ENCODE measurements at regions of chr13 and their contacts with region 1.

Region 1: DNA sequence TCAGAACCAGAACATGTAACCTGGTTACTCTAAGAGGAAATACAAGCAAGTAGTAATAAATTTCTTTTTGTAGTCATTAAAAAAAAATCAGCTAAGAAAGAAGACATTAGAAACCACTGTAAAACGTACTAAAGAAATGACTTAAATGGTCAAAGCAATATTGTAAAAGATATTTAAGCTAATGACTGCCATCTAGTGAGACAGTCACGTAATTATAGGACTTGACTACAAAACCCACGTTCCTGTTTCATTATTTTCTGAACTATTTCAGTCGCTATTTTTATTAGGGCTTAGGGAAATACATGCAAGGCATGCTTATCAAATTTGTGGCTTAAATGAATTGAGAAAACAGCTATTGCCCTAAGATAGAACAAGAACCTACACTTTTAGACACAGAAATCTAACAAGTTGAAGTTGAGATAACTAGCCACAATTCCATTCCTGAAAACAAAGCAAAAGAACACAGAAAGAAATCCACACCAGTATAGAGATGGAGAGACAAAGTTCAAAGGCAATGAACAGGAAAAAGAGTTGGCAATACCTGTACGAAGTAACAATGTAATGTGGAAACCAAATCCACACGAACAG is 17.9 kb downstream of the ALG5 start:
- DNase-seq: peak in 2 of 3 donors; percentile 24 to 35
- H3K4me3 ChIP-seq: no peak overlapping the region
- H3K4me3 Mint-ChIP-seq: no peak overlapping the region
- H3K27ac ChIP-seq: no peak overlapping the region
- H3K27ac Mint-ChIP-seq: peak overlapping the region in 1 of 7 donors; percentile 37
- H3K4me1 ChIP-seq: peaks cover 4 to 13% of the 10 kb centered on the region in 2 donors
- H3K4me1 Mint-ChIP-seq: peaks cover 16% of the 10 kb centered on the region
- H3K27me3 ChIP-seq: no peaks in the 10 kb centered on the region
- H3K27me3 Mint-ChIP-seq: peaks cover 0 to 2% (median 0%) of the 10 kb centered on the region in 3 donors
- CTCF ChIP-seq: peak; percentile 63

Region 2: DNA sequence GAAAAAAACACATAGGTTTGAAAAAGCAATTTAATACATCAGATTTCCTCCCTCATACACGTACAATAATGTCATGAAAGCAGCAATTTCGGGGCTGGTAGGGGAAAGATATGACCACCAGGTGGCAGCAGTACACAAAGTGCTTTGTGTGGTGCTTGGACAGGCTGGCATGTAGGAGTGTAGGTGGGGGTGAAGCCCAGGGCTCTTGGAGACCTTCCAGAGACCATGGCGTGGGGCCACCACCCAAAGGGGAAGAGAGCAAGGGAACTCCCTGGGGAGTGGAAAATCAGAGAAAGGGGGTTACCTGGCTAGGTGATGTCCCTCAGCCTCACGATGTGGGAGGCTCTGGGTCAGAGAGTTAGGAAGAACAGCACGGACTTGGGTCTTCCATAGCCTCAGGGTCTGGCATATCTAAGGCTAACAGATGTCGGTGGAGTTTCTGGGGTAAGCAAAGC is 560.8 kb before region 1 on chr13:
- intact Hi-C with region 1: loop called in 1 of 2 experiments (anchors 10 kb)
- DNase-seq: peak; percentile 59 to 75 (median 73)
- H3K4me3 ChIP-seq: no peak overlapping the region
- H3K4me3 Mint-ChIP-seq: peak overlapping the region in 1 of 2 donors; percentile 42
- H3K27ac ChIP-seq: no peak overlapping the region
- H3K27ac Mint-ChIP-seq: peak overlapping the region in 3 of 7 donors; percentile 55 to 80 (median 78)
- H3K4me1 ChIP-seq: peaks cover 24 to 35% of the 10 kb centered on the region in 2 donors
- H3K4me1 Mint-ChIP-seq: peaks cover 37% of the 10 kb centered on the region
- H3K27me3 ChIP-seq: no peaks in the 10 kb centered on the region
- H3K27me3 Mint-ChIP-seq: peaks cover 0 to 1% (median 0%) of the 10 kb centered on the region in 3 donors
- CTCF ChIP-seq: peak; percentile 93

Region 3: GRCh38 chr13:36818804-36819738 is 162.2 kb before region 1 on chr13 and contains the start of gene RFXAP:
- intact Hi-C with region 1: no loop called
- DNase-seq: peak; percentile 88 to 89 (median 88)
- H3K4me3 ChIP-seq: peak within 1 kb of the TSS; percentile 73 to 93 (median 80)
- H3K4me3 Mint-ChIP-seq: peak within 1 kb of the TSS; percentile 90 to 97
- H3K27ac ChIP-seq: peak within 1 kb of the TSS; percentile 30 to 81
- H3K27ac Mint-ChIP-seq: peak within 1 kb of the TSS; percentile 75 to 93 (median 86)
- H3K4me1 ChIP-seq: peaks cover 17 to 30% of the 10 kb centered on the region in 2 donors
- H3K4me1 Mint-ChIP-seq: peaks cover 48% of the 10 kb centered on the region
- H3K27me3 ChIP-seq: no peaks in the 10 kb centered on the region
- H3K27me3 Mint-ChIP-seq: peaks cover 0 to 3% (median 0%) of the 10 kb centered on the region in 3 donors
- CTCF ChIP-seq: no peak
- polyA plus RNA-seq, gene RFXAP: 1.1 to 3.3 (median 1.8) TPM